ENCODE measurements at regions of chr6 and their contacts with region 1.

Region 1: GRCh38 chr6:41735427-41736356 is at the start of gene TFEB:
- H3K4me3 Mint-ChIP-seq: peak within 1 kb of the TSS; percentile 83
- H3K27ac Mint-ChIP-seq: peak within 1 kb of the TSS; percentile 85
- H3K4me1 Mint-ChIP-seq: peaks cover 42% of the 10 kb centered on the region
- H3K27me3 Mint-ChIP-seq: no peaks in the 10 kb centered on the region

Region 2: GRCh38 chr6:41705996-41706835 is 29.5 kb before region 1 on chr6:
- intact Hi-C with region 1: loop called (anchors 1 kb)
- H3K4me3 Mint-ChIP-seq: peak overlapping the region; percentile 49
- H3K27ac Mint-ChIP-seq: peak overlapping the region; percentile 88
- H3K4me1 Mint-ChIP-seq: peaks cover 81% of the 10 kb centered on the region
- H3K27me3 Mint-ChIP-seq: no peaks in the 10 kb centered on the region

Measured in dendritic cell treated with granulocyte-macrophage colony-stimulating factor and Interleukin-4, amounts not matched to agents 40 ng/mL and 50 ng/mL, for 4 days (primary cell).